Caco-2 (cell line): ENCODE measurements at regions of chr3 and their contacts with region 1.

Region 1: DNA sequence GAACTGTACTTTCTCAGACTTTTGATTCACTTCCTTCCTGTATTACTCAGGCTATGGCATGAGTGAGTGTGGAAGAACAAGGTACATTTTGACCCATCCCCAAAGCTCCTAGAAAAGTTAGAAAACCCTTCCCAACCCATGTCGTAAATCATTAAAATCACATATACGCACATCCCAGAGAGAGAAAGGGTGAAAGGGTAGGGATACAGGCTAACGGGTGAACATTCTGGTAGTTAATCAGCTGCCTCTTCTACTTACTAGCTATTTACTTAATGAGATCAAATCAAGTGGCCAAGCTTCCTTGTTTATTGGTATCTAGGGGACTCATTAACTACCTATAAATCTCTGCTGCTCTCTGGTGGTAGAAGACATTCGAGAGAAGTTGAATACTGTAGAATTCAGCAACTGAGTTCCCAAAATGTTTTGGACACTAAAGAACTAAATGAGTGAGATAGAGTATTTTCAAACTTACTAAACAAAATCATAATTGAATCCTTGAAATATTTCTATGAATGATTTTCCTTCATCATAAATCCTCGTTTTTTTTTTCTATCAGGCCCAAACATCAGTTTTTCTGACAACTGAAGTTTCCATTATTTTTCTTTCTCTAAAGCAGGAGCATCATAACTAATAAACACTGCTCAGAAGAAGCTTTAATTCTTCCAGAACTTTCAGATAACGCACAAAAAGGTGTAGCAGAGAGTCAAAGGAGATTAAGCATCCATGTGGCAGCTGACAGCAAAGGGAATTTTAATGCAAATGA is 124.2 kb downstream of the IMPG2 start:
- DNase-seq: peak in 1 of 2 experiments; percentile 48
- H3K4me3 ChIP-seq: no peak overlapping the region
- H3K4me3 Mint-ChIP-seq: no peak overlapping the region
- H3K27ac Mint-ChIP-seq: no peak overlapping the region
- H3K4me1 ChIP-seq: no peaks in the 10 kb centered on the region
- H3K4me1 Mint-ChIP-seq: no peaks in the 10 kb centered on the region
- H3K27me3 ChIP-seq: no peaks in the 10 kb centered on the region
- H3K27me3 Mint-ChIP-seq: no peaks in the 10 kb centered on the region
- CTCF ChIP-seq: peak; percentile 43 to 47

Region 2: GRCh38 chr3:100737334-100737733 is 458.8 kb before region 1 on chr3:
- CTCF ChIA-PET with region 1: no interaction called
- POLR2A ChIA-PET with region 1: no interaction called
- intact Hi-C with region 1: loop called (anchors 5 kb)
- DNase-seq: peak in 1 of 2 experiments; percentile 12
- H3K4me3 ChIP-seq: no peak overlapping the region
- H3K4me3 Mint-ChIP-seq: no peak overlapping the region
- H3K27ac Mint-ChIP-seq: no peak overlapping the region
- H3K4me1 ChIP-seq: peaks cover 5% of the 10 kb centered on the region; the same call in 1 of the 2 replicates
- H3K4me1 Mint-ChIP-seq: peaks cover 28% of the 10 kb centered on the region
- H3K27me3 ChIP-seq: no peaks in the 10 kb centered on the region
- H3K27me3 Mint-ChIP-seq: no peaks in the 10 kb centered on the region
- CTCF ChIP-seq: peak; percentile 8 to 12

Region 3: DNA sequence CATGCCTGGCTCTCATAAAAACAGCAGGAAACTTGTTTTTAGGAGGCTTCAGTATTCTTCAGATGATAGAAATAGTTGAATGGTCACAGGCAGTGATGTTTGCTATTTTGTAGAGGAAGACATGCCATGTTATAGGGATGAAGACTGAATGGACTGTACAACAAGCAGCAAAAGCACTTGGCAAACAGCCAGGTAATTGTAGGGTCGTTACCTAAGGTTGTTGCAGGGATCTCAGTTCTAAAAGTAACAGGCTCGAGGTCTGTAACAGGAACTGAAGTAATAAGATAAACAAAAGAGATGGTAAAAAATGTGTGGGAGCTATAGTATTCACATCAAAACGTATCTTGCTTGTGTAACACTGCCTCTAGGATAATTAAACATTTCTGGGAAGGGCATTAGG is 370.6 kb before region 1 on chr3:
- CTCF ChIA-PET with region 1: interaction called, 7 read pairs
- POLR2A ChIA-PET with region 1: no interaction called
- intact Hi-C with region 1: loop called (anchors 1 kb)
- DNase-seq: no peak
- H3K4me3 ChIP-seq: no peak overlapping the region
- H3K4me3 Mint-ChIP-seq: no peak overlapping the region
- H3K27ac Mint-ChIP-seq: no peak overlapping the region
- H3K4me1 ChIP-seq: no peaks in the 10 kb centered on the region
- H3K4me1 Mint-ChIP-seq: no peaks in the 10 kb centered on the region
- H3K27me3 ChIP-seq: no peaks in the 10 kb centered on the region; the same call in 1 of the 2 replicates
- H3K27me3 Mint-ChIP-seq: peaks cover 8% of the 10 kb centered on the region
- CTCF ChIP-seq: no peak

Region 4: GRCh38 chr3:100893590-100893989 is 302.5 kb before region 1 on chr3:
- CTCF ChIA-PET with region 1: interaction called, 4 read pairs
- POLR2A ChIA-PET with region 1: no interaction called
- intact Hi-C with region 1: loop called (anchors 1 kb)
- DNase-seq: peak in 1 of 2 experiments; percentile 15
- H3K4me3 ChIP-seq: no peak overlapping the region
- H3K4me3 Mint-ChIP-seq: no peak overlapping the region
- H3K27ac Mint-ChIP-seq: no peak overlapping the region
- H3K4me1 ChIP-seq: no peaks in the 10 kb centered on the region
- H3K4me1 Mint-ChIP-seq: no peaks in the 10 kb centered on the region
- H3K27me3 ChIP-seq: no peaks in the 10 kb centered on the region
- H3K27me3 Mint-ChIP-seq: peaks cover 6% of the 10 kb centered on the region
- CTCF ChIP-seq: peak; percentile 32 to 46

Region 5: DNA sequence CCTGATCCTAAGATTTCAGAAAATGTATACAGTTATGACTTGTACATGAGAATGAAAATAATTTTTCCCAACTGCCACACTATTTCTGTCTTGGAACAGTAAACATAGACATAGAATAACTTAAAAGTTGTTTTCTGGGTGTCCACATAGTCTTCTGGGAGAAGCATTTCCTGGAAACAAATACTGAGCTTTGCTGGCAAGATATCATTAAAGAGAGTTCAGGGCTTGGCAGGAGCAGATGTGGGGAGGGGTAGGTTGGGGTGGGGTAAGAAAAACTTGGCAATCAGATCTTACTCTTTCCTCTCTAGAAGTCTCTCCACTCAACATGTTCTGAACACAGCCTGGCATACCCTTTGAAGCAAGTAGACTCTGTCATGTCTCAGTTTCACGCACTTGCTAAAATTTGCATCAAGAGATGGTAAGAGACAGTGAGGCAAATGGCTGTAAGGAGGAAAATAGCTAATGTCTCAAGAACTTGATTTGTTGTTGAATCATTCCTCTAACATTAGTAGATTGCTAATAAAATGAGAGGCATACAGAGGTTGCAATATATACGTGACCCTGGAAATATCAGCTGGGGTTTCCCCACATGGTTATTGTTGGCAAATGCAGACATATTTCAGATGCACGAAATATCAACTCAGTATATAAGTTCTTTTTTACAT is 175.6 kb before region 1 on chr3:
- CTCF ChIA-PET with region 1: no interaction called
- POLR2A ChIA-PET with region 1: no interaction called
- intact Hi-C with region 1: no loop called
- DNase-seq: no peak
- H3K4me3 ChIP-seq: no peak overlapping the region
- H3K4me3 Mint-ChIP-seq: no peak overlapping the region
- H3K27ac Mint-ChIP-seq: no peak overlapping the region
- H3K4me1 ChIP-seq: no peaks in the 10 kb centered on the region
- H3K4me1 Mint-ChIP-seq: no peaks in the 10 kb centered on the region
- H3K27me3 ChIP-seq: no peaks in the 10 kb centered on the region
- H3K27me3 Mint-ChIP-seq: peaks cover 2% of the 10 kb centered on the region
- CTCF ChIP-seq: no peak

Region 6: DNA sequence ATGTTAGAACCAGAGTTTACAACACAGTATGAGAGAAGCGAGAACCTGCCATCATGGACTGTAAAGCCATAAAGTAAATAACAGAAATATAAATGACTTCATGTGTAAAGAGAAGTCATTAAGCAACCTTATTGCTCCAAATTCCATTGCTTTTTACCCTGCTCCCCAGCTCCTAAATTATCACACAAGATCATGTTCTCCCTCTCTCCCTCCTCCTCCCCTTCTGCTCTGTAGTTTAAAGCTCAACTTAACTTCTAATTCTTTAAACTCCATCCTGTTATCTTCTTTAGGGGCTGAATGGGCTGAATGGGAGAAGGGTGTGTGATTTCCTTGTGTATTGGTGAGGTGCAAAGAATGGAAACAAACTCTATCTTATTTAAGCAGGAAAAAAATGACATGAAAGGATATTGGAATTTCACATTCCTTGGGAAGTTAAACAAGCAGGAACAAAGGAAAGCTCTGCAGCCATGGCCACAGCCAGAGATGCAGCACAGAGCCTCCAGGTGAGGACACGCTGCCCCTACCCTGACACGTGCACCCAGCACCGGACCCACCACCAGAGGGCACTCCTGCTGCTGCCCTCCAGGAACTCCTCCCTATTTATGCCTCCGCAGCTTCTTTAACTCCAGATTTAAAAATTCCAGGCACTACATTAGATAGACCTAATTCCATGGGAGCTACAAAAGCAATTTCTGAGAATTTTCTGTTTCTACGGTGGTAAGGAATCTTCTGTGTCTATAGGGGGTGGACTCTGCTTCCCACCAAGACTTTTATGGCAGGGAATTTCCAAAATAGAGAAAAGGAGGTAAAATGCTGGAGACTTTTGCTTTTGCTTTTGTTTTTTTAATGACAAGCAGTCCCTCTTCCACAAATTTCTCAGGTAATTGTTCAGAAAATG is 126.0 kb before region 1 on chr3:
- CTCF ChIA-PET with region 1: interaction called, 23 read pairs
- POLR2A ChIA-PET with region 1: no interaction called
- intact Hi-C with region 1: loop called (anchors 1 kb)
- DNase-seq: peak; percentile 81 to 85
- H3K4me3 ChIP-seq: no peak overlapping the region
- H3K4me3 Mint-ChIP-seq: peak overlapping the region; percentile 8
- H3K27ac Mint-ChIP-seq: peak overlapping the region; percentile 74
- H3K4me1 ChIP-seq: peaks cover 8% of the 10 kb centered on the region
- H3K4me1 Mint-ChIP-seq: peaks cover 32% of the 10 kb centered on the region
- H3K27me3 ChIP-seq: no peaks in the 10 kb centered on the region
- H3K27me3 Mint-ChIP-seq: no peaks in the 10 kb centered on the region
- CTCF ChIP-seq: peak; percentile 80 to 86

Region 7: DNA sequence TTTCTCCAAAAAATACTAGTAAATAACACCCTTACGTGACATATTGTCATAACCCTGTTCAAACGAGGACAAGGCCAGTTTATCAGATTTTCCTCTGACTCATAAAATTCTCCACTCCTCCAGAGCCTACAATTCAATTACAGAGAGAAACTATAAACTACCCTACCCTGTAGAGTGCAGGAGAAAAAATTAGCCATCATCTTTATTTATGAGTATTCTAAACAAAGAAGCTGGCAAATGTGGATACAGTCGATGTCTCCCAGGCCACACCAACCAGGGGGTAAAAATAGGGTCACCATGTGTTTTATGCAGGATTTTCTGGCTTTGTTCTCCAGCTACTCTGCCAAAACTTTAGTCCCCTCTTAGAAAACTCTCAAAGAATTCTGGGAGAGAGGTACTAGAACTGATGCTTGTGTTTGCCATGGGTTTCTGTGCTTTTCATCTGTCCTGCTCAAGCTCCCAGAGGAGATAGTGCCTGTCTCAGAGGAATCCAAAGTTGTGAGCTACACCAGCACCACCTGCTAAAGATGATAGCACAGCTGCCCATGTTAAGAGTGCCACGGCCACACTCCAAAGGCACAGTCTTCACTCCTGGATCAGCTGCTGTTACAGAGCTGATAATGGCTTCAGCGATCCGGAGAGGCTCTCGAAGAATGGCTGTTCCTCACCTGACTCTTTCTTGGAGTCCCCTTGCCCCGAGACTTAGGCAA is 25.9 kb before region 1 on chr3:
- CTCF ChIA-PET with region 1: no interaction called
- POLR2A ChIA-PET with region 1: no interaction called
- intact Hi-C with region 1: no loop called
- DNase-seq: no peak
- H3K4me3 ChIP-seq: no peak overlapping the region
- H3K4me3 Mint-ChIP-seq: no peak overlapping the region
- H3K27ac Mint-ChIP-seq: no peak overlapping the region
- H3K4me1 ChIP-seq: no peaks in the 10 kb centered on the region
- H3K4me1 Mint-ChIP-seq: no peaks in the 10 kb centered on the region
- H3K27me3 ChIP-seq: no peaks in the 10 kb centered on the region
- H3K27me3 Mint-ChIP-seq: peaks cover 6% of the 10 kb centered on the region
- CTCF ChIP-seq: no peak